ENCODE measurements at regions of chr2 and their contacts with region 1.

Region 1: GRCh38 chr2:218659258-218659987 is at the starts of genes BCS1L and ZNF142:
- DNase-seq: peak; percentile 93 to 95
- ATAC-seq: peak; percentile 82 to 88 (median 85)
- H3K4me3 ChIP-seq: peak within 1 kb of the TSS; percentile 95
- H3K27ac ChIP-seq: peak within 1 kb of the TSS; percentile 84
- H3K4me1 ChIP-seq: peaks cover 48% of the 10 kb centered on the region
- H3K27me3 ChIP-seq: no peaks in the 10 kb centered on the region
- CTCF ChIP-seq: no peak
- total RNA-seq, gene BCS1L: 24.3 to 40.5 (median 26.8) TPM
- total RNA-seq, gene ZNF142: 12.0 to 33.5 (median 30.1) TPM

Region 2: DNA sequence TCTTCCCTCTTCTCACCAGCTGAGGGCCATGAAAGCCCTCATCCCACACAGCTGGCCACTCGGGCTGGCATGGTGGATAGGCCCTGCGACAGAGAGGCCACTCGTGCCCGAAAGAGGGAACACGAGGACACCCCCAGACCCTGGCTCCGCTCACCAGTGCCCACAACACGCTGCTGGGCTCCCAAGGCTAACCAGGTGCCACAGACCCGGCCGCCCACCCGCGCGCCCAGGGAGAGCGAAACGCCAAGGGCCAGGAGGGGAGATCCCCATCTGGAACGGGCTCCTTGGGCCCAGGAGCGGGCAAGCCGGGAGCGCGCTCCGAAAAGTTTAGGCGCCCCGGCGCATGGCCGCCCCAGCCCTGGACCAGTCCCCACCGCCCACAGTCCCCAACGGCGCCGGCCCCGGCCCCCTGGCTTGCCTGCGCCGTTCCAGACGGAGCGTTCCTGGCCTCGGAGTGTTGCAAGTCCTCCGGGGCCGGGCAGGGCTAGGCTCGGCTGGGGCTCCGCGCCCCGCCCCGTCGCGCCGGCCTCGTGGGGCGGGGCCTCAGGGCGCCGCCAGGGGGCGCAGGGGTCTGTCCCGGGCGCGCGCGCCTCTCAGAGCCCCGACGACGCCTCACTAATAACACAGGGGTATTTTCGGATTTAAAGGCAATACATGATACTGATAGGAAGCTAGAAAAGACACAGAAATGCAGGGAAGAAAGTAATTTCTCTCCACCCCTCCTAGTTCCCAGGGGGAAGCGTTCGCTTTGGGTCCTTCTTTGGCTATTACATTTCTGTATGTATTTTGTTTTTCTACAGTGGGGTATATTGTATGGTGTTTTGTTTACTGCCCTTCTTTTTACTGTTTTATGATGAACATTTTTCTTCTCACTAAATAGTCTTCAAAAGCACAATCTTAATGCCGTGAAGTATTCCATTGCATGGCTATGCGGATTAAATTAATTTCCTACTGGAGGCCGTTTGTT is 367.1 kb before region 1 on chr2 and contains the start of gene TMBIM1:
- intact Hi-C with region 1: loop called in 1 of 2 experiments (anchors 10 kb)
- DNase-seq: peak; percentile 88 to 92
- ATAC-seq: peak; percentile 88 to 95 (median 93)
- H3K4me3 ChIP-seq: peak within 1 kb of the TSS; percentile 93
- H3K27ac ChIP-seq: peak within 1 kb of the TSS; percentile 96
- H3K4me1 ChIP-seq: peaks cover 39% of the 10 kb centered on the region
- H3K27me3 ChIP-seq: no peaks in the 10 kb centered on the region
- CTCF ChIP-seq: peak; percentile 96
- total RNA-seq, gene TMBIM1: 152 to 197 (median 157) TPM

Region 3: DNA sequence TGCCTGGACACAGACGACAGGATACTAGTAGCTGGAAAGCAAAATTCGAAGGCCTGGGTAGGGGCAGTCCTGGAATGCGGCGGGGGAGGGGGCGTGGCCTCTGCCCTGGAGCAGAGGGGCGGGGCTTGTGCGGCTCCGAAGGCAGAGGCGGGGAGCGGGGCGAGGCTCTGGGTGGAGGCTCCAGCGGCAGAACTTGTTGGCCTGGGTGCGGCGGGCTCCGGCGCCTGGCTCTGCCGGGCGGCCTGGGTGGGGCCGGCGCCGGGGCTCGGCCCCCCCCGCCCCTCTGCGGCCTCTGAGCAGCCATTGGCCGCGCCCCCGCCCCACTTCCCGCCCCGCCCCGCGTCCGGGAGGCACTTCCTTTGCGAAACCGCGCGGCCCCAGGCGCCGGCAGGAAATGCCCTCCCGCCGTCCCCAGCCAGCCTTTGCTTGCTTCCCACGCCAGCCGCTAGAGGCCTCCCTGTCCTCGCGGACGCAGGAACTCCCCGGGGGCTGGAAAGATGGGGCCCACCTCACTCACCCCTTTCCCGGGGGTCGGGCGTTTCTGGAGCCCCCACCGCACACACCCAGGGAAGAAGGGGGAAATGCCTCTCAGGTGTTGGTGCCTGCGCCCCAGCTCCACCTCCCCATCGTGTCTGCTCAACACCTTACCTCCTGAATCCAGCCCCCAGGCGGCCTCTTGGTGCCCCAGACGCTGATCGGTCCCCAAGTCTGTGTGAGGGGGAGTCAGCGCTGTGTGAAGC is 253.0 kb before region 1 on chr2:
- intact Hi-C with region 1: loop called (anchors 5 to 10 kb)
- DNase-seq: peak; percentile 98 to 99
- ATAC-seq: peak; percentile 86 to 89 (median 88)
- H3K4me3 ChIP-seq: peak overlapping the region; percentile 60
- H3K27ac ChIP-seq: peak overlapping the region; percentile 74
- H3K4me1 ChIP-seq: peaks cover 26% of the 10 kb centered on the region
- H3K27me3 ChIP-seq: no peaks in the 10 kb centered on the region
- CTCF ChIP-seq: peak; percentile 71

Region 4: GRCh38 chr2:218582076-218582475 is 77.3 kb before region 1 on chr2:
- intact Hi-C with region 1: loop called in 1 of 2 experiments (anchors 5 kb)
- DNase-seq: no peak
- ATAC-seq: no peak
- H3K4me3 ChIP-seq: no peak overlapping the region
- H3K27ac ChIP-seq: no peak overlapping the region
- H3K4me1 ChIP-seq: peaks cover 27% of the 10 kb centered on the region
- H3K27me3 ChIP-seq: no peaks in the 10 kb centered on the region
- CTCF ChIP-seq: no peak

Region 5: GRCh38 chr2:218607436-218608115 is 51.8 kb before region 1 on chr2 and contains the start of gene PLCD4:
- intact Hi-C with region 1: loop called in 1 of 2 experiments (anchors 5 kb)
- DNase-seq: peak; percentile 38 to 75
- ATAC-seq: peak; percentile 81 to 89 (median 86)
- H3K4me3 ChIP-seq: peak within 1 kb of the TSS; percentile 70
- H3K27ac ChIP-seq: peak within 1 kb of the TSS; percentile 75
- H3K4me1 ChIP-seq: peaks cover 51% of the 10 kb centered on the region
- H3K27me3 ChIP-seq: no peaks in the 10 kb centered on the region
- CTCF ChIP-seq: no peak
- total RNA-seq, gene PLCD4: 20.3 to 85.2 (median 43.0) TPM

Measured in psoas muscle (tissue), 8 donors.